Dendritic cell treated with granulocyte-macrophage colony-stimulating factor and Interleukin-4, amounts not matched to agents 40 ng/mL and 50 ng/mL, for 4 days (primary cell): ENCODE measurements at regions of chr5 and their contacts with region 1.

Region 1: DNA sequence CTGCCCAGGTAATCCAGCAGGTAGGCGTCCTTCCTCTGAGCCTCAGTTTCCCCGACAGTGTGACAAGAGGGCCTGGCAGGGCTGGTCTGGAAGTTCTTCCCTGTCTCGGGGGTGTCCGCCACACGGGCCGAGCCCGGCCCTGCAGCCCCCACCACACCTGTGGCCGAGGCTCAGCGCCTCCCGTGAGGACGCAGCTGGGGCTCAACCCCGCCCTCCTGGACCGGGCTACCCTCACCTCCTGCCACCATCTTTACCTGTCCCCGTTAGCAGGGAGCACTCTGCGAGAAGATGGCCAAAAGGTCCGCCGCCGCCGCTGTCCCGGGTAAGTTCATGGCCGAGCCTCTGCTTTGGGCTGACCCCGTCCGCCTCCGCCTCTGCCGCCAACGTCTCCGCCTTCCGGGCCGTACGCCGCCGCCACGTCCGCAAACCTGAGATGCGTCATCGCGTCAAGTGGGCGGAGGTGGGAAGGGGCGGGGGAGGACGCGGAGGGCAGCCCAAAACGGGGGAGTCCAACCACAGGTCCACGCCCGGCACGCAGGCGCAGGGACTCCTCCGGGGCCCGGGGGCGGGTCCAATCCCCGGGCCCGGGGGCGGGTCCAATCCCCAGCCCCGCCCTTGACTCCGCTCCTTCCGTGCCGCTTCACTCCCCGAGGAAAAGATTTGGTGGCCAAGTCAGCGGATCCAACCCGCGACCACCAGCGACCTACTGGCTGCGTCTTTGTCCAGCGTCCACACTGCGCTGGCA is at the start of gene LYSMD3:
- H3K4me3 Mint-ChIP-seq: peak within 1 kb of the TSS; percentile 95
- H3K27ac Mint-ChIP-seq: peak within 1 kb of the TSS; percentile 95
- H3K4me1 Mint-ChIP-seq: peaks cover 31% of the 10 kb centered on the region
- H3K27me3 Mint-ChIP-seq: peaks cover 8% of the 10 kb centered on the region

Region 2: DNA sequence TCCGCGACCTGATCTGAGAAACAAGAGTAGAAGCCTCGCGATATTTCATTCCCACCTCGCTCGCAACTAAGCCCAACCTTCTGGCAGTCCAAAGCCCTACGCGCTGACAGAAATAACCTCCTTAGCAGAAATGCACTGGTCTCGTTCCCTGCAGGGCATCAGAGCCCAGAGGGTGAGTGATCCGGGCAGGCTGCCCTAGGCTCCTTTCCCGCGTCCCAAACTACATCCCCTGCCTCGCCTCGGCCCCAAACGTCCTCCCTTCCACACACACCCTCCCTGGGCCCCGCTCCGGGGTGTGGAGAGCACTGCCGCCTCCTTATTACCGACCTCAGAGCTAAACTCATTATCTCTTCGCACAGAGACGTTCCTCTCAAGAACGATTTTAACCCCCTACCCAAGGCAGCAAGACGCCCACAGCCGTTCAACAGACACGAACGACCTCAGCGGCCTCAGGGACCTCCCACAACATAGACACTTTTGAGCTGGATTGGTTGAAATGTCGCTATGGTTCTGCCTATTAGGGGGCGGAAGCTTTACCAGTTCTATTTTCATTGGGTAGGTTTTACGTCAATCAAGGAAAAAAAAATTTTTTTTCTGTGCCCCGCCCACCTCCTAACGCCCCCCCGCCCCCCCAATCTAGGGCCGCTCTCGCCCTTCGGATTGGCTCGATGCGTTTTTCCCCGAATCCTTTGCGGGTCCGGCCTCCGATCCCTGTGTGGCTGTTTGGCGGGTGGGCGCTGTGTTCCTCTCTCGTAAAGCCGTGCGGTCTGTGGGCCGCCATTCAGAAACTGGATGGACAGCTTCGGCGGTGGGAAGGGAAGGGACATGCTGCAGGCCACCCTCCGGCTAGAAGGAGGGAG is 119.8 kb before region 1 on chr5 and contains the start of gene CETN3:
- intact Hi-C with region 1: loop called (anchors 1 kb)
- H3K4me3 Mint-ChIP-seq: no peak within 1 kb of the TSS
- H3K27ac Mint-ChIP-seq: no peak within 1 kb of the TSS
- H3K4me1 Mint-ChIP-seq: peaks cover 15% of the 10 kb centered on the region
- H3K27me3 Mint-ChIP-seq: peaks cover 1% of the 10 kb centered on the region

Region 3: DNA sequence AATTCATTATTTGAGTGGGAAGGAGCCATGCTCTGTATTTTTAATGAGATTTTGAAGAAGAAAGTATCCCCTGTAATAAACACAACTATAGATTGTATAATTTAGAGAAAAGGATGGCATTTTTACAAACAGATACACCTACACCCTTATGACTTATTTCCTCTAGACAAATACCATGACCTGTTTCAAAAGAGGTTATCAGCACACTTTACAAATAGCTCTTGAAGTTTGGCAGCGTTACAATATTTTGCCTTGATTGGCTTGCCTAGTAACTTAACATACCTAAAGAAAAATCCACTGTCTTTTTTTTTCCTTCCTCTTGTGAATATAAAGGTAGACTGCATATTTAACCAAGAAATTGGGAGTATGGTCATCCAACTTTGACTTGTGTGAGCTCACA is 91.3 kb before region 1 on chr5:
- intact Hi-C with region 1: loop called (anchors 2 kb)
- H3K4me3 Mint-ChIP-seq: no peak overlapping the region
- H3K27ac Mint-ChIP-seq: no peak overlapping the region
- H3K4me1 Mint-ChIP-seq: peaks cover 5% of the 10 kb centered on the region
- H3K27me3 Mint-ChIP-seq: no peaks in the 10 kb centered on the region

Region 4: GRCh38 chr5:90474235-90475109 is 54.9 kb before region 1 on chr5 and contains the starts of genes MBLAC2 and POLR3G:
- intact Hi-C with region 1: loop called (anchors 1 kb)
- H3K4me3 Mint-ChIP-seq: peak within 1 kb of the TSS; percentile 99
- H3K27ac Mint-ChIP-seq: peak within 1 kb of the TSS; percentile 88
- H3K4me1 Mint-ChIP-seq: peaks cover 16% of the 10 kb centered on the region
- H3K27me3 Mint-ChIP-seq: peaks cover 9% of the 10 kb centered on the region